Colonic mucosa (tissue), 4 donors: ENCODE measurements at regions of chr16 and their contacts with region 1.

Region 1: DNA sequence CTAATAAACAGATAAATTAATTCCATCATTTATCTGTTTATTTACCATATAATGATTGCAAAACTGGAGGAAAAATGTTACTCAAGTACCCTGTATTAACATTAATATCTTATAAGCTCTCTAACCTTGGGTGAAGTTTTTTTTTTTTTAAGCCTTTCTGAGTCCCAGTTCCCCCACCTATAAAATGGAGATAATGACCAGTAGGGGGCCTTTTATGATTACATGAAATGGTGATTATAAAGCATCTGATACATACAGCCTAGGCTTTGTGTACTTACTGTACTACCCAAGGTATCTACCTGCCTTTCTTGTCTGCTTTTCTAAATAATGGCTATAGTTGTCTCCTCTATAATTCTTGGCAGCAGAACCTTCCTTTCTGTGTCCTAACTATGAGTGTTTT is 22.6 kb downstream of the LRRC36 start:
- DNase-seq: no peak
- H3K4me3 ChIP-seq: no peak overlapping the region
- H3K27ac ChIP-seq: no peak overlapping the region
- H3K4me1 ChIP-seq: peaks cover 13% of the 10 kb centered on the region
- H3K27me3 ChIP-seq: no peaks in the 10 kb centered on the region
- CTCF ChIP-seq: no peak

Region 2: GRCh38 chr16:67284699-67285646 is 64.2 kb before region 1 on chr16:
- intact Hi-C with region 1: no loop called
- DNase-seq: peak; percentile 49
- H3K4me3 ChIP-seq: no peak overlapping the region
- H3K27ac ChIP-seq: no peak overlapping the region
- H3K4me1 ChIP-seq: no peaks in the 10 kb centered on the region
- H3K27me3 ChIP-seq: no peaks in the 10 kb centered on the region
- CTCF ChIP-seq: peak; percentile 38

Region 3: DNA sequence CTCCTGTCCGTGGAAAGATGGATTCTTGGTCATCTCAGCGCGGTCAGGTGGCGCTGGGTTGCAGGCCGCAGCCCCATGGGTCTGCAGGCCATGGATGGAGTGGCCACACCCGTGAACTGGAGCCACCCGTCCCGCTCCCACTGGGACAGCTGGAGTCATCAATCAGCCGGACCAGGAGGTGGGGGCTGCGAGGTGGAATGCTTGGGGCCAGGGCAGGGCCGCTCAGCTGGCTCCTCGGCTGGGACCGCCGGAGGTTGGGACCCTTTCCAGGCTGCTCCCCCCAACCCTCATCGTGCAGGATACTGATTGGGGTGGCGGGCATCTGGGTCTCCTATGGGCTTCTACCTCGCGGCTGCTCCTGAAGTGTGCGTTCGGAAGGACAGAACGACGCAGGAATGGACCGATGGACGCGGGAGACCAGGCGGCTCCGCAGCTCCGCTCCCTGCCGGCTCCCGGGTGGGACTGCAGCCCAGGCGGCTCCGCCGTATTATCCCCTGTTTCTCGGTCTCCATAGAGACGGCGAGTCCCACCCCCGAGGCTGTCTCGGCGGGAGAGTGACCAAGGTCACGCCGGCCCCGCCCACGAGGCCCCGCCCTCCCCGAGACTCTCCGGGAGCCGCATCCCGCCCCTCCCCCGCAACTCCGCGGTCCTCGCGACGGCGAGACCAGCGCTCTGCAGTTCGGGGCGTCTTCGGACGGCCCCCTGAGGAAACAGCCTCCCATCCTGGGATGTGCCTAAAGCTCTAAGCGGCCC is 44.0 kb after region 1 on chr16 and contains the start of gene TPPP3:
- intact Hi-C with region 1: loop called (anchors 10 kb)
- DNase-seq: peak; percentile 93
- H3K4me3 ChIP-seq: peak within 1 kb of the TSS; percentile 29
- H3K27ac ChIP-seq: peak within 1 kb of the TSS; percentile 15
- H3K4me1 ChIP-seq: peaks cover 21% of the 10 kb centered on the region
- H3K27me3 ChIP-seq: peaks cover 7% of the 10 kb centered on the region
- CTCF ChIP-seq: peak; percentile 52
- total RNA-seq, gene TPPP3: 3.7 to 12.3 TPM